PC-9 (cell line): ENCODE measurements at regions of chr22 and their contacts with region 1.

Region 1: GRCh38 chr22:30340911-30341685 is 14.4 kb upstream of the TBC1D10A start:
- DNase-seq: no peak
- H3K4me3 ChIP-seq: no peak overlapping the region
- H3K27ac ChIP-seq: no peak overlapping the region
- H3K4me1 ChIP-seq: no peaks in the 10 kb centered on the region
- H3K27me3 ChIP-seq: no peaks in the 10 kb centered on the region
- CTCF ChIP-seq: no peak

Region 2: DNA sequence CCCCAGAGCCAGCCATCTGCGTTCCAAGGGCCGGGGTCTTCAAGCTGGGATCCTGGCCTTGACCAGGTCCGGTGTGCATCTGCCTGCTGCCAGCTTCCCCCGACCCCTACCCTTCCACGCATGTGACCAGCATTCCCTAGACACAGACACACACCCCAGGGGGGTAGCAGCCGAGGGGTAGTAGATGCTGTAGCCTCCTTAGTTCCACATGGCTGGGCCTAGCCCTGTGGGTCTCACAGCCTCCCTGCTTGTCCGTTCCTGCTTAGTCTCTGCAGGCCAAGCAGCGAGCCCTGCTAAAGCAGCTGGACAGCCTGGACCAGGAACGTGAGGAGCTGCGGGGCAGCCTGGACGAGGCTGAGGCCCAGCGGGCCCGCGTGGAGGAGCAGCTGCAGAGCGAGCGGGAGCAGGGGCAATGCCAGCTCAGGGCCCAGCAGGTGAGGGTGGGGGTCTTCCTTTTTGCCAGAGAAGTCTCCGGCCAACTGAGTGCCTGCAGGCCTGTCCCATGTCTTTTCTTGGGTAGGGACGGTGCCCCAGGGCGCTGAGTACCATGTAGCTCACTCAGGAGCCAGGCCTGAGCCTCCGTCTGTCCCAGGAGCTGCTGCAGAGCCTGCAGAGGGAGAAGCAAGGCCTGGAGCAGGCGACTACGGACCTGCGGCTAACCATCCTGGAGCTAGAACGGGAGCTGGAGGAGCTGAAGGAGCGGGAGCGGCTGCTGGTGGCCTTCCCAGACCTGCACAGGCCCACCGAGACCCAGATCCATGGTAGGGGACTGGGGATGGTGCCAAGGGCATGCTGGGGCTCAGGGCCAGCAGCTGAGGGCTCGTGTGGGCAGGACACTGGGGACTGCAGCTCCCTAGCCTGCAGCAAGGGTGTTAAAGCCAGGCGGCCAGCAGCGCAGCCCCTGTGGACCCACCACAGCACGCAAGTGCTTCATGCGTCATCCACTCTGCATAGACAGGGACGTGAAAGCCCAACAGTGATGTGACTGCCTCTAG is 32.5 kb after region 1 on chr22:
- CTCF ChIA-PET with region 1: no interaction called
- POLR2A ChIA-PET with region 1: interaction called, 21 read pairs
- intact Hi-C with region 1: no loop called
- DNase-seq: no peak
- H3K4me3 ChIP-seq: no peak overlapping the region
- H3K27ac ChIP-seq: no peak overlapping the region
- H3K4me1 ChIP-seq: no peaks in the 10 kb centered on the region
- H3K27me3 ChIP-seq: no peaks in the 10 kb centered on the region
- CTCF ChIP-seq: no peak

Region 3: DNA sequence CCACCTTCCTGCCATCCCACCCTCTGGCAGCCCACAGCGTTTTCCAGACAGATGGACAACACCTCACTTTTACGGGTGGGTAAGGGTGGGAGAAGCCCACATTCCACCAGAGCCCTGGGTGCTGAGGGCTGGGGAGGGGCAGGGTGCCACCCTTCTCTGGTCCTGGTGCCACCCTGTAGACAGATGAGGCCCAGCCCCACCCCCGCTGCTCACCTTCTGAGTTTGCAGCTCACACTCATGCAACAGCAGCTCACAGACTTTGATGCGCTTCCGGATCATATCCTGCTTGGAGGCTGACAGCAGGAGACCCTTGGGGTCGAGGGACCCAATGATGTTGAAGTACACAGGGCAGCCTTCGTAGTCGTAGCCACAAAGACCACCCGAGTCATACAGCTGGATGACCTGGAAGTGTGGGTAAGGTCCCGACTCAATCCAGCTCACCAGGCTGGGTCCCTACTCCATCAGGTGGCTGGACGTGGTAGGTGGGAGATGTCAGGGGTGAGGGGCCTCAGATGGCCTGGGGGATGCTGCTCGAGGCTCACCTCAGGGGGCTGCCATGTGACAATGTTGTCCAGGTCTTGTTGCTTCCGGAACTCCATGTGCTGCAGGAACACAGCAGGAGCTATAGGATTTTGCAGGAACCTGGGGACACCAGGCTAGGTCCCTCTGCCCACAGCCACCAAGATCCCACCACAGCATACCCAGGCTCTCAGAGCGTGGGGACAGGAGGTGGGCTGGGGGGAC is 154.1 kb after region 1 on chr22:
- CTCF ChIA-PET with region 1: no interaction called
- POLR2A ChIA-PET with region 1: no interaction called
- intact Hi-C with region 1: no loop called
- DNase-seq: no peak
- H3K4me3 ChIP-seq: no peak overlapping the region
- H3K27ac ChIP-seq: no peak overlapping the region
- H3K4me1 ChIP-seq: no peaks in the 10 kb centered on the region
- H3K27me3 ChIP-seq: peaks cover 11% of the 10 kb centered on the region; the same call in 1 of the 2 replicates
- CTCF ChIP-seq: no peak